ENCODE measurements at regions of chr10 and their contacts with region 1.

Region 1: GRCh38 chr10:106711313-106711906 is 453.1 kb downstream of the SORCS1 start:
- DNase-seq: peak; percentile 8 to 46 (median 35)
- H3K4me3 ChIP-seq: no peak overlapping the region
- H3K4me3 Mint-ChIP-seq: no peak overlapping the region
- H3K27ac ChIP-seq: no peak overlapping the region
- H3K27ac Mint-ChIP-seq: no peak overlapping the region
- H3K4me1 ChIP-seq: no peaks in the 10 kb centered on the region
- H3K4me1 Mint-ChIP-seq: no peaks in the 10 kb centered on the region
- H3K27me3 ChIP-seq: no peaks in the 10 kb centered on the region
- H3K27me3 Mint-ChIP-seq: peaks cover 0 to 6% (median 2%) of the 10 kb centered on the region in 3 donors
- CTCF ChIP-seq: peak; percentile 98

Region 2: DNA sequence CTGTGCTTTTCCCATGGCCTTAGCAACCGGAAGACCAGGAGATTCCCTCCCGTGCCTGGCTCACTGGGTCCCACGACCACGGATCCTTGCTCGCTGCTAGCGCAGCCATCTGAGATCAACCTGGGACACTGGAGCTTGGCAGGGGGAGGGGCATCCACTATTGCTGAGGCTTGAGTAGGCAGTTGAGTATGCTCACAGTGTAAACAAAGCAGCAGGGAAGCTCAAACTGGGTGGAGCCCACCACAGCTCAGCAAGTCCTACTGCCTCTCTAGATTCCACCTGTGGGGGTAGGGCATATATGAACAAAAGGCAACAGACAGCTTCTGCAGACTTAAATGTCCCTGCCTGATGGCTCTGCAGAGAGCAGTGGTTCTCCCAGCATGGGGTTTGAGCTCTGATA is 243.9 kb before region 1 on chr10:
- intact Hi-C with region 1: no loop called
- DNase-seq: no peak
- H3K4me3 ChIP-seq: no peak overlapping the region
- H3K4me3 Mint-ChIP-seq: no peak overlapping the region
- H3K27ac ChIP-seq: no peak overlapping the region
- H3K27ac Mint-ChIP-seq: peak overlapping the region in 1 of 7 donors; percentile 37
- H3K4me1 ChIP-seq: no peaks in the 10 kb centered on the region
- H3K4me1 Mint-ChIP-seq: no peaks in the 10 kb centered on the region
- H3K27me3 ChIP-seq: no peaks in the 10 kb centered on the region
- H3K27me3 Mint-ChIP-seq: peaks cover 0 to 2% (median 0%) of the 10 kb centered on the region in 3 donors
- CTCF ChIP-seq: no peak

Region 3: GRCh38 chr10:106606554-106606910 is 104.9 kb before region 1 on chr10:
- intact Hi-C with region 1: no loop called
- DNase-seq: no peak
- H3K4me3 ChIP-seq: no peak overlapping the region
- H3K4me3 Mint-ChIP-seq: no peak overlapping the region
- H3K27ac ChIP-seq: no peak overlapping the region
- H3K27ac Mint-ChIP-seq: no peak overlapping the region
- H3K4me1 ChIP-seq: no peaks in the 10 kb centered on the region
- H3K4me1 Mint-ChIP-seq: no peaks in the 10 kb centered on the region
- H3K27me3 ChIP-seq: no peaks in the 10 kb centered on the region
- H3K27me3 Mint-ChIP-seq: peaks cover 0 to 4% (median 4%) of the 10 kb centered on the region in 3 donors
- CTCF ChIP-seq: no peak

Region 4: GRCh38 chr10:106761906-106762305 is 50.5 kb after region 1 on chr10:
- intact Hi-C with region 1: no loop called
- DNase-seq: no peak
- H3K4me3 ChIP-seq: no peak overlapping the region
- H3K4me3 Mint-ChIP-seq: no peak overlapping the region
- H3K27ac ChIP-seq: no peak overlapping the region
- H3K27ac Mint-ChIP-seq: no peak overlapping the region
- H3K4me1 ChIP-seq: no peaks in the 10 kb centered on the region
- H3K4me1 Mint-ChIP-seq: no peaks in the 10 kb centered on the region
- H3K27me3 ChIP-seq: no peaks in the 10 kb centered on the region
- H3K27me3 Mint-ChIP-seq: peaks cover 0 to 3% (median 1%) of the 10 kb centered on the region in 3 donors
- CTCF ChIP-seq: no peak

Region 5: GRCh38 chr10:107814865-107815487 is 1103.6 kb after region 1 on chr10:
- intact Hi-C with region 1: loop called (anchors 10 kb)
- DNase-seq: peak; percentile 3 to 40 (median 24)
- H3K4me3 ChIP-seq: no peak overlapping the region
- H3K4me3 Mint-ChIP-seq: no peak overlapping the region
- H3K27ac ChIP-seq: no peak overlapping the region
- H3K27ac Mint-ChIP-seq: no peak overlapping the region
- H3K4me1 ChIP-seq: no peaks in the 10 kb centered on the region
- H3K4me1 Mint-ChIP-seq: no peaks in the 10 kb centered on the region
- H3K27me3 ChIP-seq: no peaks in the 10 kb centered on the region
- H3K27me3 Mint-ChIP-seq: peaks cover 0 to 1% (median 0%) of the 10 kb centered on the region in 3 donors
- CTCF ChIP-seq: peak; percentile 69

Measured in CD14-positive monocyte (primary cell).